ENCODE measurements at regions of chr22 and their contacts with region 1.

Region 1: DNA sequence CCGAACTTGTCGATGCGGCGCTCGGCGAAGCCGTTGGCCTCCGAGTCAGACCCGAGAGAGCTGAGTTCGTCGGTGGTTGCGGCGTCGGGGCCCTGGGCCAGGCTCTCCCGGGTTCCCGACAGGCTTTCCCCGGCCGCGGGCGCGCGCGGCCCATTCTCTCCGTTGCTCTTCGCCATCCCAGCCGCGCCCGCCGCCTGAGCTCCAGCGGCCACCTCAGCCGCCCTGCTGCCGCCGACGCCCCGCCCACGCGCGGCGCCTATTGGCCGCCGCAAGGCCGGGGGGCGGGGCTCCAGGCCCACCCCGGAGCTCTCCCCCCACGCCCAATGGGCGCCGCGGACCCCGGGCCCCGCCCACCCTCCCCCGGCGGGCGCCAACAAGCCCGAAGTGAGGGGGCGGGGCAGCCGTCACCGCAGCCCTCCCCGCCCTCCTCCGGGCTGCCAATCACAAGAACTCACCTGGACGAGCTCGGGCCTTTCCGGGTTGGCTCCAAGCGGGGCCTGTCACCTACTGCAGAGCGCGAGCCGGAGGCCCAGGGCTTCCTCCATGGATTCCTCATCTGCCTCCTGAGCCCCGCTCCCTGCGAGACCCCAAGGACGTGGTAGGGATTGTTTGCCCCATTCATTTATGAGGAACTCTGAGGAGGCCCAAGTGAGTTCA is at the start of gene TBC1D10A:
- DNase-seq: peak; percentile 89
- total RNA-seq, gene TBC1D10A: 38.2 and 46.8 TPM in 2 replicates

Region 2: GRCh38 chr22:30423982-30424963 is 97.4 kb after region 1 on chr22:
- in situ Hi-C with region 1: loop called (anchors 10 kb)
- DNase-seq: peak; percentile 100